Esophagus squamous epithelium (tissue), 5 donors: ENCODE measurements at regions of chr5 and their contacts with region 1.

Region 1: GRCh38 chr5:83564069-83564749 is 92.7 kb downstream of the VCAN start:
- DNase-seq: no peak
- H3K4me3 ChIP-seq: no peak overlapping the region
- H3K27ac ChIP-seq: no peak overlapping the region
- H3K4me1 ChIP-seq: peaks cover 0 to 7% (median 0%) of the 10 kb centered on the region in 3 donors
- H3K27me3 ChIP-seq: no peaks in the 10 kb centered on the region
- CTCF ChIP-seq: peak; percentile 28 to 67 (median 56)
- POLR2A ChIP-seq: no peak

Region 2: GRCh38 chr5:82351754-82352145 is 1212.5 kb before region 1 on chr5:
- intact Hi-C with region 1: loop called (anchors 10 kb)
- DNase-seq: no peak
- H3K4me3 ChIP-seq: no peak overlapping the region
- H3K27ac ChIP-seq: peak overlapping the region in 1 of 4 donors; percentile 22
- H3K4me1 ChIP-seq: peaks cover 0 to 26% (median under 1%) of the 10 kb centered on the region in 3 donors
- H3K27me3 ChIP-seq: no peaks in the 10 kb centered on the region
- CTCF ChIP-seq: peak; percentile 29 to 87 (median 74)
- POLR2A ChIP-seq: no peak

Region 3: GRCh38 chr5:83937837-83938236 is 373.6 kb after region 1 on chr5:
- intact Hi-C with region 1: no loop called
- DNase-seq: no peak
- H3K4me3 ChIP-seq: no peak overlapping the region
- H3K27ac ChIP-seq: no peak overlapping the region
- H3K4me1 ChIP-seq: no peaks in the 10 kb centered on the region
- H3K27me3 ChIP-seq: no peaks in the 10 kb centered on the region
- CTCF ChIP-seq: no peak
- POLR2A ChIP-seq: no peak